ENCODE measurements at regions of chr16 and their contacts with region 1.

Region 1: DNA sequence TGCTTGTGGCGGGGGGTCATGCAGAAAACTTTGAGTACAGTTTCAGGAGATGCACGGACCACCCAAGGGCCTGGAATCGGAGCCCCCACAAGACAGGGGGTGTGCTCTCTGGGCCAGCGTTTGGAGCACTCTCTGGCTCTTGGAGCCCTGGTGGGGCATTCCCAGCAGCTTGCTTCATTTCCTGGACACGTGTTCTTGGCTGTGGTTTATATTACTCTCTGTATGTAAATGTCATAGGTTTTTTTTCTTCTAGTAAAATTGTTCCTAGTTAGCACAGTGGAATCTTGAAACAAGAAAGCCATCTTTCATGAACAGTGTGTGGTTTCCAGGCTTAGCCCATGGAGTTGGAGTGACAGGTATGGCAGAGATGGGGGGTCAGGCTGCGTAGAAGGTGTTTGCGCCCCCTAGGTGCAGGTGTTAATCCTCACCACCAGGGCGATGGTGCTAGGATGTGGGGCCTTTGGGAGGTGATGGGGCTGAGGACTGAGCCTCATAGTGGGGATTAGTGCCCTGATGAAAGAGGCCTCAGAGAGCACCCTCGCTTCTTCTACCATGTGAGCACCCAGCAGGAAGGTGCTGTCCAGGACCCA is 79.8 kb downstream of the JPH3 start:
- DNase-seq: peak; percentile 66
- H3K4me3 Mint-ChIP-seq: no peak overlapping the region
- H3K27ac Mint-ChIP-seq: peak overlapping the region; percentile 14
- H3K4me1 Mint-ChIP-seq: peaks cover 17% of the 10 kb centered on the region
- H3K27me3 Mint-ChIP-seq: no peaks in the 10 kb centered on the region

Region 2: GRCh38 chr16:87702325-87702811 is 20.3 kb after region 1 on chr16:
- CTCF ChIA-PET with region 1: no interaction called
- intact Hi-C with region 1: loop called (anchors 2 kb)
- DNase-seq: peak; percentile 63
- H3K4me3 Mint-ChIP-seq: no peak overlapping the region
- H3K27ac Mint-ChIP-seq: peak overlapping the region; percentile 75
- H3K4me1 Mint-ChIP-seq: peaks cover 47% of the 10 kb centered on the region
- H3K27me3 Mint-ChIP-seq: no peaks in the 10 kb centered on the region

Region 3: DNA sequence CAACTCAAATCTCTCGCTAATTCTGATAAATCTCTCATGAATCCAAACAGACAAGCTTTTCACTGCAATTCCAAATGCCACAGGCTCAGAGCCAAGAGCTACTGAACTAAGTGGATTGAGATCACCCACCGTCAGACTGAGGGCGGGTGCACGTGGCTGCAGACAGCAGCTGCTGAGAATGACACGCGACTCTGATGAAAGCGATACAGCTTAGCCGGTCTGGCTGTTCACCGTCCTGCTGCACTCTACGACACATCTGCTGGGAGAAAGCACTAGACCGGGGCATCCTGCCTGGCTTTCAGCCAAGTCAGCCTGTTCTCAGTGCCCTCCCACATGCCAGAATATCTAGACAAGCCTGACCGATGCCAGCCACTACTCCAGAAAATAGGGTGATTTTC is 41.1 kb after region 1 on chr16:
- CTCF ChIA-PET with region 1: no interaction called
- intact Hi-C with region 1: loop called (anchors 2 kb)
- DNase-seq: no peak
- H3K4me3 Mint-ChIP-seq: no peak overlapping the region
- H3K27ac Mint-ChIP-seq: no peak overlapping the region
- H3K4me1 Mint-ChIP-seq: peaks cover 4% of the 10 kb centered on the region
- H3K27me3 Mint-ChIP-seq: no peaks in the 10 kb centered on the region